GM12878 (cell line): ENCODE measurements at regions of chr3 and their contacts with region 1.

Region 1: DNA sequence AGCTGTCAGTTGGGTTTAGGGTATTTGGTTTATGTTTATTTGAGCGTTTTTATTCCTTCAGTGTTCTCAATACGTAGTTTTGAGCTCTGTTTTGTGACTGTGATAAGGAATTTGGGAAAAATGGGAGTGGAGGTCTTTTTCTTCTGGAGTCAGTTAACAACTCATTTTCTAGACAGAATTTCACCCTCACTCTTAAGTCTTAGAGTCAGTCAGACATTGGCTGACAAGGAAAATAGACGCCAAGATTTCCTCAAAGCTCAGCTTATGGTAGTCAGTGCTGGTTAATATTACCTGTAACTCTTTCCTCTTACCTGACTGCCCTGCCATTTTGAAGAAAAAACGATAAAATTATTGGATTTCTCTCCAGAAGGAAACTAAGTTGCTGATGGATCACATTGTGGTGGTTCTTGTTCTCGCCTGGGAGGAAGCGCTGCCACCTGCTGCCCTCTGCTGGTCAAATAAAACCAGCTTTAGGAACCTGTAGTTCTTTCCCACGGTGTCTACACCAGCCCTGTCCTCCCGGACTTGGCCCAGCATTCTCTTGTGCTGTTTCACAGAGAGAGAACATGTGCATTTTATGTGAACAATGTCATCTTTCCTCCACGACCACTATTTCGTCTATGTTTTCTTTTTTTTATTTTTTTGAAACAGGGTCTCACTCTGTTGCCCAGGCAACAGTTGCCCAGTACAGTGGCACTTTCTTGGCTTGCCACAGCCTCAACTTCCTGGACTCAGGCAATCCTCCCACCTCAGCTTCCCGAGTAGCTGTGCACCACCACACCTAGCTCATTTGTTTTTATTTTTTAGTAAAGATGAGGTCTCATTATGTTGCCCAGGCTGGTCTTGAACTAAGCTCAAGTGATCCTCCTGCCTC is 41.4 kb upstream of the UMPS start:
- DNase-seq: peak; percentile 30
- ATAC-seq: peak; percentile 94
- H3K4me3 ChIP-seq: no peak overlapping the region
- H3K27ac ChIP-seq: no peak overlapping the region
- H3K4me1 ChIP-seq: no peaks in the 10 kb centered on the region
- H3K27me3 ChIP-seq: no peaks in the 10 kb centered on the region
- CTCF ChIP-seq: peak; percentile 75 to 95 (median 79); a peak in 5 of 6 replicates
- EP300 ChIP-seq: no peak
- POLR2A ChIP-seq: no peak
- RAD21 ChIP-seq: peak; percentile 91

Region 2: GRCh38 chr3:124569761-124570160 is 119.1 kb before region 1 on chr3:
- CTCF ChIA-PET with region 1: interaction called, 577 read pairs
- POLR2A ChIA-PET with region 1: interaction called, 5 read pairs
- RAD21 ChIA-PET with region 1: interaction called, 199 read pairs
- SMC1A ChIA-PET with region 1: interaction called, 309 read pairs
- in situ Hi-C with region 1: loop called (anchors 5 kb)
- intact Hi-C with region 1: loop called (anchors 1 kb)
- DNase-seq: no peak
- ATAC-seq: peak; percentile 24
- H3K4me3 ChIP-seq: no peak overlapping the region
- H3K27ac ChIP-seq: no peak overlapping the region
- H3K4me1 ChIP-seq: peaks cover 6% of the 10 kb centered on the region
- H3K27me3 ChIP-seq: no peaks in the 10 kb centered on the region
- CTCF ChIP-seq: no peak
- EP300 ChIP-seq: no peak
- POLR2A ChIP-seq: no peak
- RAD21 ChIP-seq: no peak

Region 3: DNA sequence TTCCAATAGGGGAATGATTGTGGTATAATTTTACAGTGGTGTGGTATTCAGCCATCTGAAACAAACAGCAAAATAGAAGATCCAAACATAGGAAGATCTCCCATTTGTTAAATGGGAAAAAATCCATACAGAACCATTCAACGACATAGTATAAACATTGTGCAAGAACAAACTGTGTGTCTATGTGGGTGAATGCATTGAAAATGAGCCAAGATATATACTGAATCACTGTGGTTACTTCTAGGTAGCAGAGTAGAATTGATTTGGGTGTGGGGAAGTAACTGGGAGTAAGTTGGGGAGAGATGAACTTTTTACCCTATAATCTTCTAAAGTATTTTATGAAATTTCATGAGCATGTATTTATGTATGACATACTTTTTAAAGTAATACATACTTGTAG is 81.7 kb before region 1 on chr3:
- CTCF ChIA-PET with region 1: interaction called, 11 read pairs
- POLR2A ChIA-PET with region 1: no interaction called
- RAD21 ChIA-PET with region 1: interaction called, 3 read pairs
- SMC1A ChIA-PET with region 1: interaction called, 6 read pairs
- in situ Hi-C with region 1: no loop called
- intact Hi-C with region 1: no loop called
- DNase-seq: no peak
- ATAC-seq: no peak
- H3K4me3 ChIP-seq: no peak overlapping the region
- H3K27ac ChIP-seq: no peak overlapping the region
- H3K4me1 ChIP-seq: no peaks in the 10 kb centered on the region
- H3K27me3 ChIP-seq: no peaks in the 10 kb centered on the region
- CTCF ChIP-seq: no peak
- EP300 ChIP-seq: no peak
- POLR2A ChIP-seq: no peak
- RAD21 ChIP-seq: no peak

Region 4: DNA sequence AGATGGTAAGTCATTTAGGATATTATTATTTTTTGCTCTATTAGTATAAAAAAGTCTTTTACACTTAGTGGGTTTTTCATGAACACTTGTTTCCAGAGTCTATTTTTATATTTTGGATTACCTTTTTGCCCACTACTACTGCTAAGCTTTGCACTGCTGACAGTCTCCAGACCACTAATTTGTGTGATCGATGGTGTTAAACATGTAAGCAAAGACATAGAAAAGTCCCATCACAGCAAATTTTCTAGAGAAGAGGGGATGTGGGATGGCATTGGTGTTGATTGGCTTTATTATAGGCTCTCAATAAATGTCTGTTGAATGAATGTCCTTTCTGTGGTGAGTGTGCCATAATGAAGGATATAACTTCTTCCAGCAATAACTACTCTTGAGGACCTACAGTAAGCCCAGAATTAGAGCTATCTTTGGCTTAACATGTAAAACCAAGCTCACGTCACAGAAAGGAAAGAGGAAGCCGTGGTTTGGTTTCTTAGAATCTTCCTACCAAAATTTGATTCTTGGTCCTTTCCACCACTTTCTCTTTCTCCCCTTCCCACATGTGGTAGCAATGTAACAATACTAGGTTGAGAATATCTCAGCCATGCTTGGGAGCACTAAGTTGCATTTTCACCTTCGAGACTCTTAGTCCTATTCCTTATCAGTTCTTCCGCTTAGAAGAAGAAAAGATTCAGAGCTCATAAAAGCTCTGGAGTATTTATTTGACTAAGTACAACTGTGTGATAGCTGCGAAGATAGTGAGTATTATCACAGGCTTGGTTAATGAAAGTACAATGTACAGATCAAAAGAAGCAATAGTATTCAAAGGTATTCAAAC is 49.2 kb before region 1 on chr3:
- CTCF ChIA-PET with region 1: interaction called, 14 read pairs
- POLR2A ChIA-PET with region 1: interaction called, 3 read pairs
- RAD21 ChIA-PET with region 1: interaction called, 17 read pairs
- SMC1A ChIA-PET with region 1: interaction called, 26 read pairs
- in situ Hi-C with region 1: no loop called
- intact Hi-C with region 1: no loop called
- DNase-seq: peak; percentile 77
- ATAC-seq: peak; percentile 81
- H3K4me3 ChIP-seq: no peak overlapping the region; the same call in 1 of the 2 replicates
- H3K27ac ChIP-seq: peak overlapping the region; percentile 40
- H3K4me1 ChIP-seq: peaks cover 23% of the 10 kb centered on the region
- H3K27me3 ChIP-seq: no peaks in the 10 kb centered on the region
- CTCF ChIP-seq: no peak
- EP300 ChIP-seq: peak in 1 of 2 experiments; percentile 47; a peak in 2 of 4 replicates
- POLR2A ChIP-seq: no peak
- RAD21 ChIP-seq: no peak

Region 5: DNA sequence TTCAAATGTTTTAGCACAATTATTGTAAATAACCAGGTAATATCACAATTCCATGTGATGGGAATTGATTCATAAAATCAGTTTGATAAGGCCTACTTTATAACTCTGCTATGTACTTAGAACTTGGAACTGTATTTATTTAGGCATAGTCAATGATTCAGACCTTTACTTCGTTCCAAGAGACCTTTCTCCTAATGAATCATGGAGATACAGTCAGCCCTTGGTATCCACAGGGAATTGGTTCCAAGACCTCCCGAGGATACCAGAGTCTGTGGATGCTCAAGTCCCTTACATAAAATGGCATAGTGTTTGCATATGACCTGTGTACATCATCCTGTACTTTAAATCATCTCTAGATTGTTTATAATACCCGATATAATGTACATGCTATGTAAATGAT is 19.3 kb before region 1 on chr3:
- CTCF ChIA-PET with region 1: interaction called, 21 read pairs
- POLR2A ChIA-PET with region 1: no interaction called
- RAD21 ChIA-PET with region 1: interaction called, 6 read pairs
- SMC1A ChIA-PET with region 1: interaction called, 13 read pairs
- in situ Hi-C with region 1: no loop called
- intact Hi-C with region 1: no loop called
- DNase-seq: no peak
- ATAC-seq: no peak
- H3K4me3 ChIP-seq: no peak overlapping the region
- H3K27ac ChIP-seq: no peak overlapping the region
- H3K4me1 ChIP-seq: no peaks in the 10 kb centered on the region
- H3K27me3 ChIP-seq: no peaks in the 10 kb centered on the region
- CTCF ChIP-seq: no peak
- EP300 ChIP-seq: no peak
- POLR2A ChIP-seq: no peak
- RAD21 ChIP-seq: no peak

Region 6: GRCh38 chr3:124730129-124730940 is 41.5 kb after region 1 on chr3 and contains the start of gene UMPS:
- CTCF ChIA-PET with region 1: interaction called, 11 read pairs
- POLR2A ChIA-PET with region 1: no interaction called
- RAD21 ChIA-PET with region 1: interaction called, 9 read pairs
- SMC1A ChIA-PET with region 1: interaction called, 8 read pairs
- in situ Hi-C with region 1: no loop called
- intact Hi-C with region 1: no loop called
- DNase-seq: peak; percentile 51
- ATAC-seq: peak; percentile 97
- H3K4me3 ChIP-seq: peak within 1 kb of the TSS; percentile 93
- H3K27ac ChIP-seq: peak within 1 kb of the TSS; percentile 87
- H3K4me1 ChIP-seq: no peaks in the 10 kb centered on the region
- H3K27me3 ChIP-seq: no peaks in the 10 kb centered on the region
- CTCF ChIP-seq: no peak
- EP300 ChIP-seq: 0 out of 4 replicates have a peak, but pooled peaks of 1 of the 2 experiments have one; percentile 13
- POLR2A ChIP-seq: peak; percentile 99
- RAD21 ChIP-seq: no peak
- polyA plus RNA-seq, gene UMPS: 52.1 to 69.2 TPM